ENCODE measurements at regions of chr19 and their contacts with region 1.

Region 1: GRCh38 chr19:6737284-6738046 is at the start of gene GPR108:
- DNase-seq: peak; percentile 100
- H3K27ac ChIP-seq: peak within 1 kb of the TSS; percentile 98
- CTCF ChIP-seq: no peak

Region 2: GRCh38 chr19:6516659-6517291 is 220.7 kb before region 1 on chr19:
- CTCF ChIA-PET with region 1: interaction called, 11 read pairs
- POLR2A ChIA-PET with region 1: no interaction called
- DNase-seq: peak; percentile 86
- H3K27ac ChIP-seq: peak overlapping the region; percentile 80
- CTCF ChIP-seq: peak; percentile 97

Region 3: GRCh38 chr19:6761053-6761676 is 23.7 kb after region 1 on chr19:
- CTCF ChIA-PET with region 1: no interaction called
- POLR2A ChIA-PET with region 1: interaction called, 10 read pairs
- DNase-seq: peak; percentile 51
- H3K27ac ChIP-seq: no peak overlapping the region
- CTCF ChIP-seq: no peak

Region 4: DNA sequence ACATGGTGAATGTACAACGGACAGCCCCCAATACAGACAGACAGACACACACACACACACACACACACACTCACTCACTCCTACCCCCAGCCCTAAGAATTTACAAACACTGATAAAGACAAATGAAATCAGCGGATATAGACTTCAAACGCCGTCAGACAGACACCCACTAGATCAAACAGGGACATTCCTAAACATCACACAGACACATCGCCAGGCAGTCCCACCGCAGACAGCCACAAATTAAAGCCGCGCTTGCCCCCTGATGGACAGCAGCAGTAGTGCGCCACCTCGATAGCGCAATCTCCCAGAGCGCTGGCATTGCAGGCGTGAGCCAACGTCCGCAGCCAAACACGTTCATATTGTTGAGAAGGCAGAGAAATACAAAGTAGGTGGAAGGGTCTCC is 125.2 kb after region 1 on chr19:
- CTCF ChIA-PET with region 1: interaction called, 19 read pairs
- POLR2A ChIA-PET with region 1: no interaction called
- DNase-seq: peak; percentile 62
- H3K27ac ChIP-seq: peak overlapping the region; percentile 60
- CTCF ChIP-seq: peak; percentile 76

Region 5: DNA sequence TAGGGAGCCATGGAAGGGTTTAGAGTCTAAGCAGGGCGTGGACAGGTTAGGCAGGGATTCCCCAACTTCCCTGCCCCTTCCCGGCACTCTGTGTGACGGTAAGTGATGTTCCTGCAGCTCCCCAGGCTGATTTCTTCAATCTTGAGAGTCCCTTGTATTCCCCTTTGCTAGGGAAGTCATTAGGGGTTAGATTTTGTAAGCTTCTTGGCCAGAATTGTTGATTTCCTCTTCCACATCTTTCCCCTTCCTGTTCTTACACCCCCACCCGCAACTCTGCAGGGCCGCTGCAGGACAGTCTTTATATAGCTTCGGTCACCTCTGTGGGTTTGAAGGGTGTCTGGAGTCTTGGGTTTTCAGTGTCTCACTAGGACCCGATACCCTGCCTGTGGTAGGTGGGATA is 139.3 kb after region 1 on chr19:
- CTCF ChIA-PET with region 1: no interaction called
- POLR2A ChIA-PET with region 1: no interaction called
- DNase-seq: no peak
- H3K27ac ChIP-seq: no peak overlapping the region
- CTCF ChIP-seq: no peak

Measured in RWPE1 (cell line).